Heart right ventricle (tissue), 16 donors: ENCODE measurements at regions of chr19 and their contacts with region 1.

Region 1: DNA sequence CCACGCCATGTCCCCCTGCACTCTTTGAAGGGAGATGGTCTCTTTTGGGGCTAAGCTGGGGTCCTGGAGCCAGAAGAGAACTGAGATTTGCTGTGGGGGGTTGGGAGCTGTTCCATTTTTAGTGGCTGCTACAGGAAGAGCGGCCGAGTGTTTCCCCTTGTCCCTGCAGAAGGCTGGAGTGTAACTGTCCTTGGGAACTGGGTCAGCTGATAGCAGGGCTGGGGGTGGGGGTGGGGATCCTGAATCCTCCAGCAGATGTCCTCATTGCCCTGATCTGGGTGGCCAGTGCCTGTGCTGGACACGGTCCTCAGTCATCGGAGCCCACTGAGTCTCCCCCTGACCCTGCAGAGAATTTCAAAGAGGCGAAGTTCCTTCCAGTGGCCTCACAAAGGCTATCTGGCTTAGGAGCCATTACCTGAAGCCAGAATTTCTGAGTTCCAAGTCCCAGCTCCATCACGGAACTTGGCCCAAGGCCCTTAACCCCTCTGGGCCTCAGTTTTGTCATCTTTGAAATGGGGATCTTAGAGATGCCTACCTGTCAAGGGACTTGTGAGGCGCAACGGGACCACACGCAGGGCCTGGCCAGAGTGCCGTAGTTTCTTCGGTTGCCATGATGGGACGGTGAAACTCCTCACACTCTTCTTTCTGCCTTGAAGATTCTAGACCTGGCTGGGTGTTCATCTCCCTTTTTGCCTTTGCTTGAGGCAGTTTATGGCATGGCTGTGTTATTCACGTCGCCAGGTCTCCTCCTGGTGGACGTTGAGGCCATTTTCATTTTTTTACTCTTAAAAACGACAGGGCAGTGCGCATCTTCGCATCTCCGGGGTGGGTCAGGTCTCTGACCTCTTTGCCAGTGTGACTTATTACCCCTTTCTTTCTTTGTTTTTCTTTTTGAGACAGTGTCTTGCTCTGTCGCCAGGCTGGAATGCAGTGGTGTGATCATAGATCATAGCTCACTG is 51.9 kb downstream of the DNM2 start:
- DNase-seq: peak; percentile 66 to 85
- ATAC-seq: peak; percentile 80 to 89 (median 87)
- H3K4me3 ChIP-seq: peak overlapping the region in 7 of 10 donors; percentile 2 to 24 (median 14)
- H3K27ac ChIP-seq: peak overlapping the region; percentile 85 to 96 (median 92)
- H3K4me1 ChIP-seq: peaks cover 46 to 59% (median 56%) of the 10 kb centered on the region in 9 donors
- H3K27me3 ChIP-seq: no peaks in the 10 kb centered on the region
- CTCF ChIP-seq: peak in 7 of 9 donors; percentile 29 to 60 (median 45)

Region 2: DNA sequence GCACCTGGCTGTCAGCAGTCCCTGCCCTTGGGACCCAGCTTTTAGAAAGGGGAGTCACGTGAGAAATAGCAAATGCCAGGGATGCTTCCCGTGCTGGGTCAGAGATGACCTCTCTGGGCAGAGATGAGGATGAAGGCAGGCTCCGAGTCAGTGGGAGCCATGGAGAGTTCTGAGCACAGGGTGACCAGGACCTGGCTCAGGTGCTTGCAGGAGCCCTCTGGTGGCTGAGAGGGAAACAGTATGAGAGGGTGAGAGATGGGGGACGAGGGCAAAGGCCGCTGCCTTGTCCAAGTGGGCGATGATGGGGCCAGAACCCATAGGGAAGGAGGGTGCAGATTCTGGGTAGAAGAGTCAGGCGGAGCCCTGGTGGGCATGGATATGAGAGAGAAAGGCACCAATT is 50.4 kb after region 1 on chr19:
- intact Hi-C with region 1: loop called in 1 of 10 experiments (anchors 10 kb)
- DNase-seq: no peak
- ATAC-seq: no peak
- H3K4me3 ChIP-seq: no peak overlapping the region
- H3K27ac ChIP-seq: no peak overlapping the region
- H3K4me1 ChIP-seq: peaks cover 0 to 11% (median 0%) of the 10 kb centered on the region in 9 donors
- H3K27me3 ChIP-seq: no peaks in the 10 kb centered on the region
- CTCF ChIP-seq: peak in 7 of 9 donors; percentile 12 to 33 (median 21)

Region 3: GRCh38 chr19:10858204-10858828 is 88.5 kb after region 1 on chr19:
- intact Hi-C with region 1: loop called in 8 of 10 experiments (anchors 5 to 10 kb)
- DNase-seq: no peak
- ATAC-seq: no peak
- H3K4me3 ChIP-seq: no peak overlapping the region
- H3K27ac ChIP-seq: no peak overlapping the region
- H3K4me1 ChIP-seq: peaks cover 0 to 15% (median 0%) of the 10 kb centered on the region in 9 donors
- H3K27me3 ChIP-seq: no peaks in the 10 kb centered on the region
- CTCF ChIP-seq: peak in 8 of 9 donors; percentile 19 to 67 (median 56)

Region 4: DNA sequence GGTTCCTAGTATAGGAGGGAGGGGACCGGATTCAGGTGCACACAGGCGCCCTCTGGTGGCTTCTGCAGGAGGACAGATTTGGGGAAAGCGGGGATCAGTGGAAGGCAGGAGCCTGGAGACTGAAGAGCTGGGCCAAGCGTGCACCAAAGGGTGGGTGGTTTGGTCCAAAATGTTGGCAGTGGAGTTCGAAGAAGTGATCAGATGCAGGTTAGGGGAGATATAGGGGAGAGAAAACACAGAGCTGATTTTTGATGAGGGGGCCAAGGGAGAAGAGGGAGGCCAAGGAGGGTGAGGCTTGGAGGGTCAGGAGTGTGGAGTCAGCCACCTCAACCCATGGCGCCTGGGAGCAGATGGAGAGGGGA is 94.7 kb after region 1 on chr19:
- intact Hi-C with region 1: loop called in 8 of 10 experiments (anchors 5 to 10 kb)
- DNase-seq: peak; percentile 86 to 89
- ATAC-seq: peak; percentile 66 to 92 (median 86)
- H3K4me3 ChIP-seq: peak overlapping the region in 1 of 10 donors; percentile 15
- H3K27ac ChIP-seq: peak overlapping the region in 3 of 10 donors; percentile 8 to 38 (median 18)
- H3K4me1 ChIP-seq: peaks cover 0 to 39% (median 6%) of the 10 kb centered on the region in 9 donors
- H3K27me3 ChIP-seq: no peaks in the 10 kb centered on the region
- CTCF ChIP-seq: peak; percentile 83 to 94 (median 91)